B cell (primary cell): ENCODE measurements at regions of chr11 and their contacts with region 1.

Region 1: GRCh38 chr11:11028017-11028692 is 170.3 kb upstream of the ZBED5 start:
- DNase-seq: peak; percentile 69
- ATAC-seq: peak; percentile 88
- H3K4me3 ChIP-seq: no peak overlapping the region
- H3K4me3 Mint-ChIP-seq: no peak overlapping the region
- H3K27ac ChIP-seq: no peak overlapping the region
- H3K27ac Mint-ChIP-seq: no peak overlapping the region
- H3K4me1 ChIP-seq: no peaks in the 10 kb centered on the region
- H3K4me1 Mint-ChIP-seq: peaks cover 2% of the 10 kb centered on the region
- H3K27me3 ChIP-seq: peaks cover 0 to 10% (median 6%) of the 10 kb centered on the region in 4 experiments
- H3K27me3 Mint-ChIP-seq: peaks cover 25% of the 10 kb centered on the region
- CTCF ChIP-seq: peak; percentile 93

Region 2: GRCh38 chr11:10792398-10792975 is 235.7 kb before region 1 on chr11:
- CTCF ChIA-PET with region 1: interaction called, 42 read pairs
- POLR2A ChIA-PET with region 1: no interaction called
- intact Hi-C with region 1: no loop called
- DNase-seq: peak; percentile 86
- ATAC-seq: peak; percentile 97
- H3K4me3 ChIP-seq: peak overlapping the region in 2 of 5 experiments; percentile 17 to 32
- H3K4me3 Mint-ChIP-seq: peak overlapping the region; percentile 17
- H3K27ac ChIP-seq: no peak overlapping the region
- H3K27ac Mint-ChIP-seq: no peak overlapping the region
- H3K4me1 ChIP-seq: peaks cover 13 to 20% of the 10 kb centered on the region in 2 donors
- H3K4me1 Mint-ChIP-seq: peaks cover 21% of the 10 kb centered on the region
- H3K27me3 ChIP-seq: no peaks in the 10 kb centered on the region
- H3K27me3 Mint-ChIP-seq: no peaks in the 10 kb centered on the region
- CTCF ChIP-seq: peak; percentile 90

Region 3: GRCh38 chr11:10943968-10944367 is 84.2 kb before region 1 on chr11:
- CTCF ChIA-PET with region 1: interaction called, 11 read pairs
- POLR2A ChIA-PET with region 1: no interaction called
- intact Hi-C with region 1: no loop called
- DNase-seq: no peak
- ATAC-seq: no peak
- H3K4me3 ChIP-seq: no peak overlapping the region
- H3K4me3 Mint-ChIP-seq: no peak overlapping the region
- H3K27ac ChIP-seq: no peak overlapping the region
- H3K27ac Mint-ChIP-seq: no peak overlapping the region
- H3K4me1 ChIP-seq: no peaks in the 10 kb centered on the region
- H3K4me1 Mint-ChIP-seq: no peaks in the 10 kb centered on the region
- H3K27me3 ChIP-seq: no peaks in the 10 kb centered on the region
- H3K27me3 Mint-ChIP-seq: peaks cover 12% of the 10 kb centered on the region
- CTCF ChIP-seq: no peak

Region 4: DNA sequence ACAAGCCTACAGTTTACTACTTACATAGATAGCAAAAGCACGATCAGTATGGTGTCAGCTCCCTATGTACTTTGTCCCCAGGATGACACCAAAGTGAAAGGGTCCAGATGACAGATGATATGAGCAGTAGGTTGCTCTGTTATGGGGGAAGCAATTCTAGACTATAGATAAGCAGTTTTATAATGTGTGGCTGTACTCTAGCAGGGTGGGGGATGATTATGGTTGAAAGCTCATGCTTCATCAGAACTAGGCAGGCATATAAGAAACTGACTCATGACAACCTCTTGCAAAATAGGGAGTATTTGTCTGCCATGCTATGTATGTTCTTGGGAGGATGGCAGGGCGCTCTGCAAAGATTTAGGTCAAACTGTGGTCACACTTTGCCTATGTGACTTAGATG is 12.1 kb before region 1 on chr11:
- CTCF ChIA-PET with region 1: interaction called, 19 read pairs
- POLR2A ChIA-PET with region 1: no interaction called
- intact Hi-C with region 1: no loop called
- DNase-seq: no peak
- ATAC-seq: no peak
- H3K4me3 ChIP-seq: no peak overlapping the region
- H3K4me3 Mint-ChIP-seq: no peak overlapping the region
- H3K27ac ChIP-seq: no peak overlapping the region
- H3K27ac Mint-ChIP-seq: no peak overlapping the region
- H3K4me1 ChIP-seq: peaks cover 15% of the 10 kb centered on the region in 2 donors
- H3K4me1 Mint-ChIP-seq: peaks cover 18% of the 10 kb centered on the region
- H3K27me3 ChIP-seq: no peaks in the 10 kb centered on the region
- H3K27me3 Mint-ChIP-seq: no peaks in the 10 kb centered on the region
- CTCF ChIP-seq: no peak

Region 5: DNA sequence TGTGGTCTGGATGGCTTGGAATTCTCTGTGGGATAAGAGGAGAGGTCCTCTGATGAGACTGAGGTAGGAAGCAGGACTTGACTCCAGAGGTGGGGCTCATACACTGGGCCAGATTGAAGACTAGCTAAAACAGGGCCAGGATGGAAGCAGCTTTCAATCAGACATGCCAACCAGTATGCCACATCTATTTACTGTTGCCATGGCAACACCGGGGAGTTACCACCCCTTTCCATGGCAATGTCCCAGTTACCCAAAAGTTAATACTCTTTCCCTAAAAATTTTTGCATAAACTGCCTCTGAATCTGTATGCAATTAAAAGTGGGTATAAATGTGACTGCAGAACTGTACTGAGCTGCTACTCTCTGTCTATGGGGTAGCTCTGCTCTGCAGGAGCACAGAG is 77.2 kb after region 1 on chr11:
- CTCF ChIA-PET with region 1: no interaction called
- POLR2A ChIA-PET with region 1: no interaction called
- intact Hi-C with region 1: no loop called
- DNase-seq: no peak
- ATAC-seq: no peak
- H3K4me3 ChIP-seq: no peak overlapping the region
- H3K4me3 Mint-ChIP-seq: no peak overlapping the region
- H3K27ac ChIP-seq: no peak overlapping the region
- H3K27ac Mint-ChIP-seq: no peak overlapping the region
- H3K4me1 ChIP-seq: no peaks in the 10 kb centered on the region
- H3K4me1 Mint-ChIP-seq: no peaks in the 10 kb centered on the region
- H3K27me3 ChIP-seq: peaks cover 0 to 7% (median 1%) of the 10 kb centered on the region in 4 experiments
- H3K27me3 Mint-ChIP-seq: peaks cover 21% of the 10 kb centered on the region
- CTCF ChIP-seq: no peak

Region 6: DNA sequence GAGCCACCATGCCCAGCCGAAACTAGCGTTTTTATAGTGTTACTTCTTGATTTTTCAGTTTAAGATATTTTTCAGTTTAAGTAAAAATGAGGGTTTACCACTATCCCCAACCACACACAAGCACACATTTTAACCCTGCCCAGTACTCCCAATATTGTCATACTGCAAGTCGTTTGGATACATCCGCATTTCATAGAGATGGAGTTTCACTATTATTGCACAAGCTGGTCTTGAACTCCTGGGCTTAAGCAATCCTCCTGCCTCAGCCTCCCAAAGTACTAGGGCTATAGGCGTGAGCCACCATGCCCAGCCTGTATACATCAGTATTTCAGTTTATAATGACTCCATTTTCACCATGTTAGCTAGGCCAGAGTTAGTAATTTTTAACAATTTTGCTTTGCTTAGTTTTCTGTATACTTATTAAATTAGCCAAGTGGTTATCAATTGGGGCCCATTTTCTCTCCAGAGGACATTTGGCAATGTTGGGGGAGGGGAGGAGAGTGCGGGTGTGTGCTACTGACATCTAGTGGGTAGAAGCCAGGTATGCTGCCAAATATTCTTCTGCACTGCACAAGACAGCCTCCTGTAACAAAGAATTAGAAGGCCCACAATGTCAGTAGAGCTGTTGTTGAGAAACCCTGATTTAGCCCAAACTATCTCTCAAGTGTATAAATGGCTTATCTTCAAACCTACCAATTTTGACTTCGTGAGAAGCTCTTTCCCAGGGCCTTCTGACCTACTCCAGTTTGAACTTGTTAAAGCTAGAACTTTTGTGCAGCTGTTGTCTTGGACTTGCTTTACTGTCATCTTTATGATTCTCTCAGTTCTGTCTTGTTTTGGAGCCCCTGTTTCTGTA is 821.0 kb after region 1 on chr11:
- CTCF ChIA-PET with region 1: interaction called, 3 read pairs
- POLR2A ChIA-PET with region 1: no interaction called
- intact Hi-C with region 1: loop called (anchors 5 kb)
- DNase-seq: peak; percentile 80
- ATAC-seq: peak; percentile 96
- H3K4me3 ChIP-seq: no peak overlapping the region
- H3K4me3 Mint-ChIP-seq: no peak overlapping the region
- H3K27ac ChIP-seq: no peak overlapping the region
- H3K27ac Mint-ChIP-seq: no peak overlapping the region
- H3K4me1 ChIP-seq: peaks cover 24 to 48% of the 10 kb centered on the region in 2 donors
- H3K4me1 Mint-ChIP-seq: peaks cover 67% of the 10 kb centered on the region
- H3K27me3 ChIP-seq: no peaks in the 10 kb centered on the region
- H3K27me3 Mint-ChIP-seq: no peaks in the 10 kb centered on the region
- CTCF ChIP-seq: peak; percentile 84